BJ (cell line): ENCODE measurements at regions of chr1 and their contacts with region 1.

Region 1: DNA sequence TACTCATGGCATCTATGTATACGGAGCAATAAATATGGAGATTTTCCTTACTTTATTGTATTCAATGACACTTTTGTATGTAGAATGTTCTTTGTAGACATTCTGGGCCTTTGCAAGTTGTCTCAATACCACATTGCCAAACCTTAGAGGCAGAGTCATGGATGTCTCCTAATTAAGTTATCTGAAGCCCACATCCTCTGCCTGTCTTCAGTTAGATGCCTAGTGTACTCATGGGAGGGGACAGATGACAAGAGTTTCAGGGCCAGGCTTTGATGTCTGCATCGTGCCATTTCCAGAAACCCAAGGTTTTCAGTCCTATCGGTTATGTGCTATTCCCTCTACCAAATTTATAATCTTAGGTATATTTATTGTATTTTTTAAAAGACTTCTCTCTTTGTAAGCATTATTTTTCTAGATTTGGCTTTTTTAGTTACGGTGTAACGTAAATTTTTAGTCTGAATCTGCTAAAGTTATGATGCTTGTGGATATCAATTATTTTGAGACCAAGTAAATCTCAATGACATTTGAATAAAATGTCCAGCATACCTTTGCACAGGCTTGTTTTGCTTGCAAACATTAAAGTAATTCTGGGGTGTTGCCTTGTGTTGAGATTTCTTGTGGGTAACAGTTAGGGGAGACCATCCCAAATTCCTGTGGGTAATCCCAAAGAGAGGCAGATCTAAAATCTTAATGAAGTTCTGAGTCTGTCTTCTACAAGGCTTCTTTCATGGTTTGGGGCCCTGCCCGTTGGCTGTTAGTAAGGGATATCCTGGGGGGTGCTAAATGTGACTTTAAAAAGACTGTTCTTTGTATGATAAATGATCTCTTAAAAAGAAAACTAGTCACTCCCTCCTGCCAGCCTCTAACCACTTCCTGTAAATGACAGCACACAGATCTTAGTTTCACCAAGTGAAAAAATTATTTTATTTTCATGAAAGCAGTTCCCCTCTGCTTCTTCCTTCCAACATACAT is 8.0 kb upstream of the MACF1 start:
- DNase-seq: peak; percentile 50
- H3K4me3 ChIP-seq: no peak overlapping the region
- H3K27me3 ChIP-seq: no peaks in the 10 kb centered on the region
- CTCF ChIP-seq: no peak

Region 2: GRCh38 chr1:38859561-38860453 is 336.7 kb before region 1 on chr1 and contains the start of gene RRAGC:
- CTCF ChIA-PET with region 1: no interaction called
- POLR2A ChIA-PET with region 1: no interaction called
- DNase-seq: peak; percentile 78
- H3K4me3 ChIP-seq: peak within 1 kb of the TSS; percentile 93
- H3K27me3 ChIP-seq: no peaks in the 10 kb centered on the region
- CTCF ChIP-seq: no peak
- polyA plus RNA-seq, gene RRAGC: 6.5 and 11.1 TPM in 2 replicates

Region 3: DNA sequence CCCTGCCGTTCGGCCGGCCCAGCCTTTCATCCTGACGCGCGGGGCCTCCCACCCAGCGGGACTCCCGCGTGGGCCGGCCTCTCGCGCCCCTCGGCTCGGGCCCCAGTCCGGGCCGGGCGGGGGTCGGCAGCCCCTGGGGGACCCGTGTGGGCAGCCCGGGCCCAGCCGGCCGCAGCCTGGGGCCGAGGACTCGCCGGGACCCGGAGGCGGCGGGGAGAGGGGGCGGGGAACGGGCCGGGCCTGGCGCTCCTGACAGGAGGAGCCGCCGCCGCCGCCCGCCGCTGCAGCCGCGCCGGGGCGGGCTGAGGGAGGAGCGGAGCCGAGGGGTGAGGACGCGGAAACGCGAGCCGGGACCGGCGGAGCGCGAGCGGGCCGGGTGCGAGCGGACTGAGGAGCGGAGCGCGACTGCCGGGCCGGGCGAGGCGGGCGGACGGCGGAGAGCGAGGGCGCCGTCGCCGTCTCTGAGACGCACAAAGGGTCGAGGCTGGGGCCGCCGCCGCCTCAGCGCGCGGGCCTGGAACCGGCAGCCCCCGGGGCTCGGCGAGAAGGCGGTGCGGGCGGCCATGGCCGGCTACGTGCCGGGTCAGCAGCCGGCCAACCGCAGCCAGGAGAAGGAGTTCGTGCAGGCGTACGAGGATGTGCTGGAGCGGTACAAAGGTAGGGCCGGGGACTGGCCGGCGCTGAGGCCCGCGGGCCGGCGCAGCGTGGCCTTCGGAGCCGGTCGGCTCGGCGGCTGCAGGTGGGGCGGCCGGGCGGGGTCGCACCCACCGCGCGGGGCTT is 91.3 kb before region 1 on chr1:
- CTCF ChIA-PET with region 1: interaction called, 55 read pairs
- POLR2A ChIA-PET with region 1: interaction called, 4 read pairs
- DNase-seq: no peak
- H3K4me3 ChIP-seq: peak overlapping the region; percentile 79
- H3K27me3 ChIP-seq: no peaks in the 10 kb centered on the region
- CTCF ChIP-seq: no peak

Region 4: GRCh38 chr1:39132505-39133339 is 63.8 kb before region 1 on chr1:
- CTCF ChIA-PET with region 1: interaction called, 24 read pairs
- POLR2A ChIA-PET with region 1: no interaction called
- DNase-seq: no peak
- H3K4me3 ChIP-seq: no peak overlapping the region
- H3K27me3 ChIP-seq: no peaks in the 10 kb centered on the region
- CTCF ChIP-seq: no peak

Region 5: GRCh38 chr1:39177682-39178081 is 18.8 kb before region 1 on chr1:
- CTCF ChIA-PET with region 1: interaction called, 18 read pairs
- POLR2A ChIA-PET with region 1: no interaction called
- DNase-seq: no peak
- H3K4me3 ChIP-seq: no peak overlapping the region
- H3K27me3 ChIP-seq: no peaks in the 10 kb centered on the region
- CTCF ChIP-seq: no peak

Region 6: DNA sequence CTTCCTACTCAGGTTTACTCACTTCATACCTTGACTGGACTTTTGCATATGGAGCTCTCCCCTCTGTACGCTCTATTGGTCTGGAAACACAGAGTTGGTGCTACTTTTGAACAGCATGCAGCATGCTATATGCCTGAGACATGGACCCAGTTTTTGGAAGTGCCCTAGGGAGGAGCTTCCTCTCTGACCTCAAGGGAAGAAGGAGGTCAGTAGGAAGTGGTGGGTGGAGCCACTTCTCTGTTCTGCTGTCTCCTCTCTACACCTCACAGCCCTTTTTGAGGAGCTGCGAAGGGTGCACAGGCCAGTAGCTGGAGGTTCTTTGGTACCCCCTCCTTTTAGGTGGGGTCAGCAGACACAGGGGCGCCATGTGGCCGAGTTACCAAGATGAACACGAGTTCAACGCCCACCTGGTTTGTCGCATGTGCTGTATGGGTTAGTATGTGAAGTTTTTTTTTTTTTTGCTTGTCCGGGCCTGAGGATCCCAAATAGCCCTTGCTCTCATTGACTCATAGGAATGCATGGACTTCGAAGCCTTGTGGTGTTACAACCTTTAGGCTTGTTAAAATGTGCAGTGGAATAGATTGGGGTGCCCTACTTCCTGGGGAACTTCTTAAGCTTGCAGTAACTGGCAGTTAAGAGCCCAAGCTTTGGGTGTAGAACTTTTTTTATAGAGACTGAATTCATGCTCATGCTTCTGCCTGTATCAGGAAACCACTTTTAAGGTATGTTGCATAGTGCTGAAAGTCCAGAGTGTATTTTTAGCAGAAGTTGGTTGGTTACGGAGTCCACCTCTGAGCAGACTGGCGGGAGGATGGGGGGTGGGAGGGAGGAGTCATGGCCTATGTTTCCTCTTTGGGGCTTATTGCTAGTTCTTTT is 18.7 kb after region 1 on chr1:
- CTCF ChIA-PET with region 1: interaction called, 17 read pairs
- POLR2A ChIA-PET with region 1: no interaction called
- DNase-seq: no peak
- H3K4me3 ChIP-seq: no peak overlapping the region
- H3K27me3 ChIP-seq: no peaks in the 10 kb centered on the region
- CTCF ChIP-seq: no peak

Region 7: DNA sequence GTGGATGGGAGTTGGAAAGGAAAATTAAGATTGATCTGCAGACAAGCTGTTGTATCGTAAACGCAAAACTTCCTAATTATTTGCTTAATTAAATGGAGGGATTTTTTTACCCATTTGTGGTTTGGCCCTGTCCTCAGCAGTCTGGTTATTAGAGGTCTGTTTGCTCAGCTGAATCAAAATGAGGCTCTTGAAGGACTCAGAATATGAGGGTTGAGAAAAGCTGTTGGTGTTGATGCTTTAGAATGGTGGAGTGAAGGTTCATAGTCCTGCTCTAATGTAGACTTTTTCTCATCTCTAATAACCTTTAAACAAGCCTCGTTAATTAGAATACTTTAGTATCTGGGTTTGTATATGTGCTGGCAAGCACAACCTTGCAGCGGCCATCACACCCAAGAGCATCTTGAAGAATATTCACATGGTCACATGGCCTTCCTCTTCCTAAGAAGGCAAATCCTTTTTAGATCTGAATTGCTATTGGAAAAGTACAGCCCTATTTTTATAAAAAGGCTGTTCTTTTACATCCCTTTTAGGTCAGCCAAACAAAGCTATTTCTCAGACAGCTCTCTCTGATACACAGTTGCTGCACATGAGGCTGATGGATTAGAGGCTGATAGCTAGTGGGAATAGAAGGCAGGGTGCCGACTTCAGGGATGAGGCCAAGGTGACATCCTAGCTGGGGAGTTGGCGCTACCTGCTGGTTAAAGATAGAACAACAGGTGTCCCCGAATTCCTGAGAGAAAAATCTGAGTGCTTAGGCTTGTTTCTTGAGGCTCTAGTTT is 61.8 kb after region 1 on chr1:
- CTCF ChIA-PET with region 1: interaction called, 85 read pairs
- POLR2A ChIA-PET with region 1: no interaction called
- DNase-seq: peak; percentile 3
- H3K4me3 ChIP-seq: no peak overlapping the region
- H3K27me3 ChIP-seq: no peaks in the 10 kb centered on the region
- CTCF ChIP-seq: peak; percentile 85

Region 8: GRCh38 chr1:39408641-39409054 is 212.1 kb after region 1 on chr1:
- CTCF ChIA-PET with region 1: interaction called, 10 read pairs
- POLR2A ChIA-PET with region 1: no interaction called
- DNase-seq: peak; percentile 87
- H3K4me3 ChIP-seq: peak overlapping the region; percentile 74
- H3K27me3 ChIP-seq: no peaks in the 10 kb centered on the region
- CTCF ChIP-seq: no peak